ENCODE measurements at regions of chr7 and their contacts with region 1.

Region 1: DNA sequence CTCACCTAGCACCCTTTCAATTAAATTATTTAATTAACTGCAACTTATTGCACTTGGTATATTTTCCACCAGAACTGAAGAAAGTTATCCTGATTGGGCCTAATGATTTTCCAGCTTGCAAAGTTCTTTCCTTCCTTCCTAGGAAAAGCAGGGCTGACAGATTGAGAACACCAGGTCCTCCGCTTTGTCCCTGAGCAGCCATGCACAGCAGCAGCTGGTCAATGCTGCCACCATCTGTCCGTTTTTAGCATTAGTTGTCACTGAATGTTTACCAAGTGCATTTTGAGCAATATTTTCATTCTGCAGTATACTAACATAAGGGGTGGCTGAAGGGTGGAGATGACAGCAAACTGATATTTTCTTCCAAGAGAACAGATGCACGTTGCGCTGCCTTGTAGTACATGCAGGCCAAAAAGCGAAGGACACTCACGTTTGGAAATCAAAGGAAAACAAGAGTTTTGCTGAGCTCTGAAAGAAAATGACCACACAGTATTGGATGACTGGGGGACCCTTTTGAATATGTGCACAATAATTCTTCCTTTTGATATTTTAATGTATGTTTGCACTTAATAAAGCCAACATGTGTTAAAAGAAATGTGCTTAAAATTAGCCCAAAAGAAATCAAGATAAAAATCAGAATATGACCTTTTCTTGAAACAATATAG is 248.8 kb upstream of the PTN start:
- DNase-seq: peak; percentile 44 to 54
- ATAC-seq: peak; percentile 90 to 96
- H3K4me3 ChIP-seq: no peak overlapping the region
- H3K27ac ChIP-seq: no peak overlapping the region
- H3K4me1 ChIP-seq: peaks cover 7% of the 10 kb centered on the region; the same call in 1 of the 3 replicates
- CTCF ChIP-seq: peak; percentile 66
- EP300 ChIP-seq: no peak
- POLR2A ChIP-seq: no peak
- RAD21 ChIP-seq: peak; percentile 80 to 91

Region 2: GRCh38 chr7:136405931-136406777 is 1186.2 kb before region 1 on chr7:
- CTCF ChIA-PET with region 1: interaction called, 17 read pairs
- POLR2A ChIA-PET with region 1: no interaction called
- DNase-seq: peak; percentile 22 to 53
- ATAC-seq: peak; percentile 93 to 94
- H3K4me3 ChIP-seq: no peak overlapping the region
- H3K27ac ChIP-seq: no peak overlapping the region
- H3K4me1 ChIP-seq: no peaks in the 10 kb centered on the region
- CTCF ChIP-seq: peak; percentile 62
- EP300 ChIP-seq: no peak
- POLR2A ChIP-seq: no peak
- RAD21 ChIP-seq: peak; percentile 34 to 47; a peak in 4 of 5 replicates

Region 3: GRCh38 chr7:137579913-137580640 is 12.3 kb before region 1 on chr7:
- CTCF ChIA-PET with region 1: interaction called, 17 read pairs
- POLR2A ChIA-PET with region 1: no interaction called
- DNase-seq: no peak
- ATAC-seq: no peak
- H3K4me3 ChIP-seq: no peak overlapping the region
- H3K27ac ChIP-seq: no peak overlapping the region
- H3K4me1 ChIP-seq: no peaks in the 10 kb centered on the region
- CTCF ChIP-seq: no peak
- EP300 ChIP-seq: no peak
- POLR2A ChIP-seq: no peak
- RAD21 ChIP-seq: no peak